HEK293 (cell line): ENCODE measurements at regions of chr20 and their contacts with region 1.

Region 1: GRCh38 chr20:62668441-62669027 is 26.2 kb downstream of the SLCO4A1 start:
- H3K4me3 ChIP-seq: no peak overlapping the region
- H3K27ac ChIP-seq: no peak overlapping the region
- H3K4me1 ChIP-seq: no peaks in the 10 kb centered on the region
- CTCF ChIP-seq: peak; percentile 85

Region 2: DNA sequence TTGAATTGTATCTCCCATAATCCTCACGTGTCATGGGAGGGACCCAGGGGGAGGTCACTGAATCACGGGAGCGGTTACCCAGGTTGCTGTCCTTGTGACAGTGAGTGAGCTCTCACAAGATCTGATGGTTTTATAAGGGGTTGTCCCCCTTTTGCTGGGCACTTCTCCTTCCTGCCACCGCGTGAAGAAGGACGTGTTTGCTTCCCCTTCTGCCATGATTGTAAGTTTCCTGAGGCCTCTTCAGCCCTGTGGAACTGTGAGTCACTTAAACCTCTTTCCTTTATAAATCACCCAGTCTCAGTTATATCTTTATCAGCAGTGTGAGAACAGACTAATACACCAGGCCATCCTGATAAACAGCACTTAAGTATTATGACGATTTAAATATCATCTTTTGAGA is 118.8 kb after region 1 on chr20:
- CTCF ChIA-PET with region 1: interaction called, 38 read pairs
- POLR2A ChIA-PET with region 1: interaction called, 4 read pairs
- H3K4me3 ChIP-seq: no peak overlapping the region
- H3K27ac ChIP-seq: no peak overlapping the region
- H3K4me1 ChIP-seq: no peaks in the 10 kb centered on the region
- CTCF ChIP-seq: no peak

Region 3: GRCh38 chr20:62808211-62808865 is 139.8 kb after region 1 on chr20:
- CTCF ChIA-PET with region 1: interaction called, 12 read pairs
- POLR2A ChIA-PET with region 1: no interaction called
- H3K4me3 ChIP-seq: no peak overlapping the region
- H3K27ac ChIP-seq: no peak overlapping the region
- H3K4me1 ChIP-seq: no peaks in the 10 kb centered on the region
- CTCF ChIP-seq: peak; percentile 65